Naive thymus-derived CD4-positive, alpha-beta T cell (primary cell): ENCODE measurements at regions of chr2 and their contacts with region 1.

Region 1: GRCh38 chr2:158903711-158904443 is 64.6 kb upstream of the TANC1 start:
- DNase-seq: no peak
- ATAC-seq: no peak
- H3K4me3 ChIP-seq: no peak overlapping the region
- H3K4me3 Mint-ChIP-seq: no peak overlapping the region
- H3K27ac ChIP-seq: no peak overlapping the region
- H3K27ac Mint-ChIP-seq: no peak overlapping the region
- H3K4me1 ChIP-seq: no peaks in the 10 kb centered on the region
- H3K4me1 Mint-ChIP-seq: no peaks in the 10 kb centered on the region
- H3K27me3 ChIP-seq: no peaks in the 10 kb centered on the region
- H3K27me3 Mint-ChIP-seq: peaks cover 0 to 11% (median 0%) of the 10 kb centered on the region in 5 donors

Region 2: GRCh38 chr2:158671360-158672245 is 232.3 kb before region 1 on chr2:
- CTCF ChIA-PET with region 1: no interaction called
- POLR2A ChIA-PET with region 1: no interaction called
- intact Hi-C with region 1: no loop called
- DNase-seq: no peak
- ATAC-seq: no peak
- H3K4me3 ChIP-seq: no peak overlapping the region
- H3K4me3 Mint-ChIP-seq: no peak overlapping the region
- H3K27ac ChIP-seq: no peak overlapping the region
- H3K27ac Mint-ChIP-seq: peak overlapping the region in 2 of 9 donors; percentile 56 to 66
- H3K4me1 ChIP-seq: no peaks in the 10 kb centered on the region
- H3K4me1 Mint-ChIP-seq: peaks cover 0 to 3% (median 0%) of the 10 kb centered on the region in 7 donors
- H3K27me3 ChIP-seq: no peaks in the 10 kb centered on the region
- H3K27me3 Mint-ChIP-seq: no peaks in the 10 kb centered on the region

Region 3: GRCh38 chr2:159185401-159186130 is 281.7 kb after region 1 on chr2:
- CTCF ChIA-PET with region 1: interaction called, 4 read pairs
- POLR2A ChIA-PET with region 1: no interaction called
- intact Hi-C with region 1: loop called in 1 of 2 experiments (anchors 1 kb)
- DNase-seq: peak in 6 of 9 donors; percentile 7 to 52 (median 35)
- ATAC-seq: peak; percentile 65
- H3K4me3 ChIP-seq: no peak overlapping the region
- H3K4me3 Mint-ChIP-seq: no peak overlapping the region
- H3K27ac ChIP-seq: no peak overlapping the region
- H3K27ac Mint-ChIP-seq: no peak overlapping the region
- H3K4me1 ChIP-seq: no peaks in the 10 kb centered on the region
- H3K4me1 Mint-ChIP-seq: peaks cover 0 to 14% (median 4%) of the 10 kb centered on the region in 7 donors
- H3K27me3 ChIP-seq: no peaks in the 10 kb centered on the region
- H3K27me3 Mint-ChIP-seq: peaks cover 0 to 2% (median 0%) of the 10 kb centered on the region in 5 donors

Region 4: DNA sequence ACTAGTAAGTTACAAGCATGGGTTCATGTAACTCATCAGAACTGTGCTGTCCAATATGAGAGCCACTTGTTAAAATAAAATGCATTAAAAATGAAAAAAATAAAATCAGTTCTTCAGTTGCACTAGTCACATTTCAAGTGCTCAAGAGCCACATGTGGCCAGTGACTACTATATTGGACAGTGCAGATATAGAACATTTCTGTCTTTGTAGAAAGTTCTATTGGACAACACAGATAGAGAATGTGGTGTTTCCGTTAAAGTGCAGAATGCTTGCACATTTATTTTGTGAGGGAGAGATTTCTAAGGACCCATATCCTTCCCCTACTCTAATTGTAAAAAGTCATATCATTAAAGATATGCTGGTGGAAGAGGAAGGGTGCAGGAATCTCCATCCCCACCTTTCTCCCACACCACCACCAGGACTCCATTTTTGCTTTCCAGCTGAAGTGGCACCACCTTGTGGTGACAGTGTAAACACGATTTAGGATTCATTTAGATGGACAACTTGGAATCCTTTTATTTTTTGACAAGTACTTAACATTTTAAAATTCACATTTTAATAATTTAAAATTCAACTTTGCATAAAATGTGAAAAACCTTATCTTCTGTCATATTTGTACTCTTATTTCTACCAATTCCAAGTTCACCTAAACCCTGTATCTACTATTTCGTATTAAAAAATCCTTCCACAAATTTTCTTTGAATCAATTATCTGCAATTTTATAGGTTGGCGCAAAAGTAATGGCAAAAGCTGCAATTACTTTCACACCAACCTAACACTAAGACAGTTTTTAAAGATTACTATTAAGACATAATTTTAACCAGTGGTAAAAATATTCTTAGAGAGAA is 903.5 kb after region 1 on chr2:
- CTCF ChIA-PET with region 1: no interaction called
- POLR2A ChIA-PET with region 1: no interaction called
- intact Hi-C with region 1: loop called (anchors 1 to 5 kb)
- DNase-seq: no peak
- ATAC-seq: peak; percentile 55
- H3K4me3 ChIP-seq: no peak overlapping the region
- H3K4me3 Mint-ChIP-seq: no peak overlapping the region
- H3K27ac ChIP-seq: no peak overlapping the region
- H3K27ac Mint-ChIP-seq: no peak overlapping the region
- H3K4me1 ChIP-seq: no peaks in the 10 kb centered on the region
- H3K4me1 Mint-ChIP-seq: peaks cover 0 to 4% (median 0%) of the 10 kb centered on the region in 7 donors
- H3K27me3 ChIP-seq: no peaks in the 10 kb centered on the region
- H3K27me3 Mint-ChIP-seq: no peaks in the 10 kb centered on the region

Region 5: GRCh38 chr2:159921752-159922404 is 1018.0 kb after region 1 on chr2:
- CTCF ChIA-PET with region 1: no interaction called
- POLR2A ChIA-PET with region 1: no interaction called
- intact Hi-C with region 1: loop called in 1 of 2 experiments (anchors 2 kb)
- DNase-seq: peak; percentile 21 to 75 (median 56)
- ATAC-seq: peak; percentile 95
- H3K4me3 ChIP-seq: no peak overlapping the region
- H3K4me3 Mint-ChIP-seq: no peak overlapping the region
- H3K27ac ChIP-seq: no peak overlapping the region
- H3K27ac Mint-ChIP-seq: no peak overlapping the region
- H3K4me1 ChIP-seq: no peaks in the 10 kb centered on the region
- H3K4me1 Mint-ChIP-seq: peaks cover 0 to 7% (median 5%) of the 10 kb centered on the region in 7 donors
- H3K27me3 ChIP-seq: no peaks in the 10 kb centered on the region
- H3K27me3 Mint-ChIP-seq: peaks cover 3 to 38% (median 18%) of the 10 kb centered on the region in 5 donors

Region 6: DNA sequence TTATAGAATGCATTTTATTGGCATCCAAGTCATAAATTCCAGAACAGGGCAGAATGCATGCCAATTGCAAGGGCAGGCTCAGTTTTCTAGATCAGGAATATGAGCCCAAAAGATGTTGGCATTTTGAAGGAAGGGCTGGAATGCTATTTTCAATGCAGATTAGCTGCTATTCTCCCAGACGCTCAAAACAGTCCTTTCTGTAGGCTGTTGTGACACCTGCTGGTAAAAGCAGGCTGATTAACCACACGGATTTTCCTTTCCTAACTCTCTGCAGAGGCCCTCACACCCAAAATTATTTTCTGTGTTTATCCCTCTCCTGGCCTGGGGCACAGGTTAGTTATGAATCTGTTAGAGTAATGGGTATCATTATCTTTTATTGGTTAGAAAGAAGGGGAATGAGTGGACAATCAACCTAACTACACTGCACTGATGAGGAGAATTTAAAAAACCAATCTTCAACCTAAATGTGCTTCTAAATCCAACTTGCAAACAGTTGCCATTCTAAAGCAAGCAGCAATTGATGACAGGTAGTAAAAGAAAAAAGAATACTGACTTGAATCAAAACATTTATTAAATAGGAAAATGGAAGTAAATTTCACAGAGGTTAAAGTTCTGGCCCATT is 1064.5 kb after region 1 on chr2:
- CTCF ChIA-PET with region 1: interaction called, 3 read pairs
- POLR2A ChIA-PET with region 1: no interaction called
- intact Hi-C with region 1: loop called (anchors 1 kb)
- DNase-seq: peak in 3 of 9 donors; percentile 1 to 8 (median 6)
- ATAC-seq: no peak
- H3K4me3 ChIP-seq: no peak overlapping the region
- H3K4me3 Mint-ChIP-seq: no peak overlapping the region
- H3K27ac ChIP-seq: no peak overlapping the region
- H3K27ac Mint-ChIP-seq: no peak overlapping the region
- H3K4me1 ChIP-seq: no peaks in the 10 kb centered on the region
- H3K4me1 Mint-ChIP-seq: no peaks in the 10 kb centered on the region
- H3K27me3 ChIP-seq: no peaks in the 10 kb centered on the region
- H3K27me3 Mint-ChIP-seq: peaks cover 0 to 5% (median 0%) of the 10 kb centered on the region in 5 donors

Region 7: DNA sequence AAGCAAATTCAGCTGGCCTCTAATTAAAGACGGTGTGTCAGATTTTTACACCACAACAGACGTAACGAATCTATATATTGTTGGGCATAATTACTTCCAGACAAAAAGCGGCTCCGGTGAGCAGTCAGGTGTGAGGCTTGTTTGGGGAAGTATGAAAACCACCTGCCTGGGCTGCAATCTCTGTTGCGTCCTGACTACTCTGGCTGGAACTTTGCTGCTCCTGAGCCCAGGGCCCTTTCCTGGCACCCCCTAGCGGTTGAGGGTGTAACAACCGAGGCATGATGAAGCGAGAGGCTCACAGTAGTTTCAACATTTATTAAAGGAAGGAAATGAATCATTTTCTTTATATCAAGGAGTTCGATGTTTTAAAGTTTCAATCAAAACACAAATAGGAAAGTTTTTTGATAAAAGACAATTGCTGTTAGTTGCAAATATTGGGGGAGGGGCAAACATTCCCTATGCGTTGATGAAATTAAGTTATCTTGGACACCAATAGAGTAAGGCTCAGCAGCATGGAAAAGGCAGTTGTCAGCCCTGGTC is 1306.8 kb after region 1 on chr2:
- CTCF ChIA-PET with region 1: no interaction called
- POLR2A ChIA-PET with region 1: no interaction called
- intact Hi-C with region 1: loop called (anchors 5 kb)
- DNase-seq: peak; percentile 46 to 79 (median 71)
- ATAC-seq: peak; percentile 90
- H3K4me3 ChIP-seq: no peak overlapping the region
- H3K4me3 Mint-ChIP-seq: no peak overlapping the region
- H3K27ac ChIP-seq: no peak overlapping the region
- H3K27ac Mint-ChIP-seq: peak overlapping the region in 1 of 9 donors; percentile 19
- H3K4me1 ChIP-seq: no peaks in the 10 kb centered on the region
- H3K4me1 Mint-ChIP-seq: peaks cover 0 to 11% (median 8%) of the 10 kb centered on the region in 7 donors
- H3K27me3 ChIP-seq: no peaks in the 10 kb centered on the region
- H3K27me3 Mint-ChIP-seq: peaks cover 0 to 22% (median 5%) of the 10 kb centered on the region in 5 donors